Heart left ventricle (tissue), 16 donors: ENCODE measurements at regions of chr10 and their contacts with region 1.

Region 1: GRCh38 chr10:89481662-89482061 is 53.7 kb downstream of the SLC16A12 start:
- DNase-seq: no peak
- ATAC-seq: peak in 3 of 4 donors; percentile 47 to 63 (median 50)
- H3K4me3 ChIP-seq: no peak overlapping the region
- H3K27ac ChIP-seq: peak overlapping the region; percentile 50 to 86 (median 78)
- H3K4me1 ChIP-seq: peaks cover 0 to 58% (median 35%) of the 10 kb centered on the region in 12 donors
- H3K27me3 ChIP-seq: no peaks in the 10 kb centered on the region
- CTCF ChIP-seq: no peak
- POLR2A ChIP-seq: no peak

Region 2: DNA sequence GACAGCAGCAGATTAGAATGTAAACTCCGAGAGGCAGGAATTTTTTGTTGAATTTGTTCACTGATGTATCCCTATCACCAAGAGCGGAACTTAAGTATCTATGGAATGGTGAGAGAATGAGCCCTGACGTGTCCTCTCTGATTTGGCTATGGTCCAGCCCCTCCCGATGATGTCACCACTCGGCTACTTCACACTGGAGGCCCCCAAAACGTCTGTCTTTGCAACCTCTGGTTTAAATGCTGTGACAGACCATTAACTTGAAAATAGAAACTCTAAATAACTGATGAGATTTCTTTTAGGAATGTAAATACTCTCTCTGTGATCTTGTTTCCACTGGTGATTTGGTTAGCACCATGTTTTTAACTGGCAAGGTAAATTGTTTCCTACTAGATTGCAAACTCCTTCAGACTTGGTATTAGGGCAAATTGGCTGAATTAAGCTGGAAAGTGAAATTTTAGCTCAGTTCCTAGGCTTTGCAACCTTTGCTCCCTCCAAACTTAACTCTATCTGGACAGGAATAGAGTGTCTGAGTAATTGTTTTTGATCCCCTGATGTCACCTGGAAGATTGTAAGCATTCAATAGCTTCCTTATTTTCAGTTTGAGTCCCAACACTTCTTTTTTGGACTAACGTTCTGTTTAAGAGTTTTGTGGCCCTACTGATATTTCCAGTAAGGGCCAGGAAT is 34.6 kb after region 1 on chr10:
- intact Hi-C with region 1: loop called in 5 of 10 experiments (anchors 5 kb)
- DNase-seq: peak; percentile 61 to 83 (median 77)
- ATAC-seq: peak; percentile 34 to 75 (median 65)
- H3K4me3 ChIP-seq: peak overlapping the region in 8 of 12 donors; percentile 22 to 46 (median 32)
- H3K27ac ChIP-seq: peak overlapping the region; percentile 72 to 92 (median 82)
- H3K4me1 ChIP-seq: peaks cover 2 to 61% (median 20%) of the 10 kb centered on the region in 12 donors
- H3K27me3 ChIP-seq: no peaks in the 10 kb centered on the region
- CTCF ChIP-seq: no peak
- POLR2A ChIP-seq: no peak

Region 3: GRCh38 chr10:89535171-89536012 is 53.7 kb after region 1 on chr10 and contains the start of gene SLC16A12:
- intact Hi-C with region 1: loop called in 1 of 10 experiments (anchors 5 kb)
- DNase-seq: peak in 4 of 5 donors; percentile 36 to 47 (median 40)
- ATAC-seq: peak; percentile 28 to 86 (median 74)
- H3K4me3 ChIP-seq: peak within 1 kb of the TSS; percentile 30 to 79 (median 60)
- H3K27ac ChIP-seq: peak within 1 kb of the TSS in 11 of 12 donors; percentile 41 to 82 (median 75)
- H3K4me1 ChIP-seq: peaks cover 0 to 13% (median 0%) of the 10 kb centered on the region in 12 donors
- H3K27me3 ChIP-seq: peaks cover 0 to 65% (median 0%) of the 10 kb centered on the region in 9 donors
- CTCF ChIP-seq: peak in 4 of 12 donors; percentile 5 to 26 (median 20)
- POLR2A ChIP-seq: peak in 1 of 2 donors; percentile 13
- total RNA-seq, gene SLC16A12: 2.0 to 6.6 (median 2.9) TPM

Region 4: GRCh38 chr10:89553064-89553734 is 71.5 kb after region 1 on chr10:
- intact Hi-C with region 1: loop called in 3 of 10 experiments (anchors 5 to 10 kb)
- DNase-seq: no peak
- ATAC-seq: peak in 3 of 4 donors; percentile 36 to 84 (median 64)
- H3K4me3 ChIP-seq: no peak overlapping the region
- H3K27ac ChIP-seq: peak overlapping the region in 1 of 12 donors; percentile 13
- H3K4me1 ChIP-seq: peaks cover 0 to 8% (median 0%) of the 10 kb centered on the region in 12 donors
- H3K27me3 ChIP-seq: no peaks in the 10 kb centered on the region
- CTCF ChIP-seq: no peak
- POLR2A ChIP-seq: no peak